ENCODE measurements at regions of chr2 and their contacts with region 1.

Region 1: GRCh38 chr2:106104332-106105062 is 89.6 kb downstream of the UXS1 start:
- DNase-seq: no peak
- H3K4me3 ChIP-seq: no peak overlapping the region
- CTCF ChIP-seq: peak; percentile 80

Region 2: DNA sequence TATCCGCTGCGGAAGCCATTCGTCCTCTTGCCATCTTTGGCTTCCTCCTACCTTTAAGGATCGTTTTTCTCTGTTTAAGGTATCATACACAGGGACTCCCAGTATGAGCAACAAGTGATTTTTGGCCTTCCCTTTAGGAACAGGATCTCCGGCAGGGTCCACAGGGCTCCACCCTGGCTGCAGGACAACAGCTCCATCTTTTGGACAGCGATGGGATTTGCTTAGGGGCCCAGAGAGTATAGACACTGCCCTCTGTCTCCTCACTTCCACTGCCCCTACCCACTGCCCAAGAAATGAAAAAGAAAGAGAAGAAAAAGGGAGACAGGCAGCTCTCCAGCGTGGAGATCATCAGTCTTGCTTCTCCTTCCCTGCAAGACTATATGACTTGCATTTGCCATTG is 134.9 kb before region 1 on chr2:
- CTCF ChIA-PET with region 1: no interaction called
- POLR2A ChIA-PET with region 1: no interaction called
- DNase-seq: no peak
- H3K4me3 ChIP-seq: no peak overlapping the region
- CTCF ChIP-seq: no peak

Region 3: DNA sequence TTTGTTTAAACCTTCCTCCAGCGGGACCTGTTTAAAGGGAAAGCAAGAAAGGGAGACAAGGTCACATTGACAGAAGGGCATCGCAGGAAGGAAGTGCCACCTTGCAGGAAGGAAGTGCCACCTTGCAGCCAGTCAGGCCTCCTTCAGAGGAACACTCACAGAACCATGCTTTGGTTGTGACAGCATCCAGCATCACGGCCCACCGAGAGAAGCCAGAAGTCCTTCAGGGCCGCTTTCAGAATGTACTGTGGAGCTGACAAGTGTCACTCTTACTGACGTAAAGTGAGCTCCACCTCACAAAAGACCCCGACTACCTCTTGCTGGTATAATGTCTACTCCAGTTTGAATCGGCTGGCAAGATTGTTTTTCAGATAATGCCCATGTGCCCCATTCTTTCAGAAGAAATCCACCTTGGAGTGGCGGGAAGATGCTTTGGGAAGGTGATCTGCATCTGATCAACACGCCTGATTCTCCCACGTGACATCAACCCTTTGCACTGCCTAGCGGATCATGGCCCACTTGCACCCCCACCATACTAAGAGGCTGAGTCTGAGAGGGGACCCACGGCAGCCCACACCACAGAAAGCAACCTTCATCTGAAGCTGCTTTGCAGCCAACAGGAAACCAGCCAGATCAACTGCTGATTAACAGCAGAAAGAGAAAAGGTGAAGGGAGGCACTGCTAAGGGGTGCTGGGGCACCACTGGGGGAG is 10.2 kb before region 1 on chr2:
- CTCF ChIA-PET with region 1: interaction called, 13 read pairs
- POLR2A ChIA-PET with region 1: no interaction called
- DNase-seq: no peak
- H3K4me3 ChIP-seq: no peak overlapping the region
- CTCF ChIP-seq: no peak

Region 4: GRCh38 chr2:106115250-106115649 is 10.8 kb after region 1 on chr2:
- CTCF ChIA-PET with region 1: interaction called, 10 read pairs
- POLR2A ChIA-PET with region 1: no interaction called
- DNase-seq: no peak
- H3K4me3 ChIP-seq: no peak overlapping the region
- CTCF ChIP-seq: no peak

Region 5: GRCh38 chr2:106542811-106543259 is 438.3 kb after region 1 on chr2:
- CTCF ChIA-PET with region 1: interaction called, 37 read pairs
- POLR2A ChIA-PET with region 1: no interaction called
- DNase-seq: no peak
- H3K4me3 ChIP-seq: no peak overlapping the region; the same call in 1 of the 2 replicates
- CTCF ChIP-seq: peak; percentile 85

Region 6: GRCh38 chr2:106582148-106583143 is 477.9 kb after region 1 on chr2:
- CTCF ChIA-PET with region 1: interaction called, 20 read pairs
- POLR2A ChIA-PET with region 1: no interaction called
- DNase-seq: no peak
- H3K4me3 ChIP-seq: peak overlapping the region; percentile 42
- CTCF ChIP-seq: peak; percentile 87